Ovary (tissue), 10 donors: ENCODE measurements at regions of chr1 and their contacts with region 1.

Region 1: GRCh38 chr1:64469977-64470664 is at the start of gene CACHD1:
- DNase-seq: peak; percentile 80 to 88 (median 88)
- H3K4me3 ChIP-seq: peak within 1 kb of the TSS; percentile 61
- H3K27ac ChIP-seq: peak within 1 kb of the TSS; percentile 89 to 91
- H3K4me1 ChIP-seq: peaks cover 7% of the 10 kb centered on the region
- H3K27me3 ChIP-seq: no peaks in the 10 kb centered on the region
- CTCF ChIP-seq: peak; percentile 36 to 50 (median 47)
- EP300 ChIP-seq: no peak
- POLR2A ChIP-seq: no peak
- total RNA-seq, gene CACHD1: 17.0 to 33.1 (median 23.2) TPM

Region 2: GRCh38 chr1:64539781-64540218 is 69.7 kb after region 1 on chr1:
- intact Hi-C with region 1: loop called (anchors 10 kb)
- DNase-seq: peak; percentile 70 to 85 (median 79)
- H3K4me3 ChIP-seq: peak overlapping the region; percentile 0
- H3K27ac ChIP-seq: peak overlapping the region in 1 of 2 donors; percentile 47
- H3K4me1 ChIP-seq: peaks cover 23% of the 10 kb centered on the region
- H3K27me3 ChIP-seq: no peaks in the 10 kb centered on the region
- CTCF ChIP-seq: no peak
- EP300 ChIP-seq: no peak
- POLR2A ChIP-seq: no peak

Region 3: GRCh38 chr1:64572222-64572900 is 102.2 kb after region 1 on chr1:
- intact Hi-C with region 1: loop called in 1 of 4 experiments (anchors 10 kb)
- DNase-seq: no peak
- H3K4me3 ChIP-seq: no peak overlapping the region
- H3K27ac ChIP-seq: no peak overlapping the region
- H3K4me1 ChIP-seq: peaks cover 6% of the 10 kb centered on the region
- H3K27me3 ChIP-seq: no peaks in the 10 kb centered on the region
- CTCF ChIP-seq: no peak
- EP300 ChIP-seq: no peak
- POLR2A ChIP-seq: no peak

Region 4: GRCh38 chr1:64584479-64584878 is 114.4 kb after region 1 on chr1:
- intact Hi-C with region 1: loop called in 2 of 4 experiments (anchors 10 kb)
- DNase-seq: no peak
- H3K4me3 ChIP-seq: no peak overlapping the region
- H3K27ac ChIP-seq: no peak overlapping the region
- H3K4me1 ChIP-seq: no peaks in the 10 kb centered on the region
- H3K27me3 ChIP-seq: no peaks in the 10 kb centered on the region
- CTCF ChIP-seq: no peak
- EP300 ChIP-seq: no peak
- POLR2A ChIP-seq: no peak

Region 5: DNA sequence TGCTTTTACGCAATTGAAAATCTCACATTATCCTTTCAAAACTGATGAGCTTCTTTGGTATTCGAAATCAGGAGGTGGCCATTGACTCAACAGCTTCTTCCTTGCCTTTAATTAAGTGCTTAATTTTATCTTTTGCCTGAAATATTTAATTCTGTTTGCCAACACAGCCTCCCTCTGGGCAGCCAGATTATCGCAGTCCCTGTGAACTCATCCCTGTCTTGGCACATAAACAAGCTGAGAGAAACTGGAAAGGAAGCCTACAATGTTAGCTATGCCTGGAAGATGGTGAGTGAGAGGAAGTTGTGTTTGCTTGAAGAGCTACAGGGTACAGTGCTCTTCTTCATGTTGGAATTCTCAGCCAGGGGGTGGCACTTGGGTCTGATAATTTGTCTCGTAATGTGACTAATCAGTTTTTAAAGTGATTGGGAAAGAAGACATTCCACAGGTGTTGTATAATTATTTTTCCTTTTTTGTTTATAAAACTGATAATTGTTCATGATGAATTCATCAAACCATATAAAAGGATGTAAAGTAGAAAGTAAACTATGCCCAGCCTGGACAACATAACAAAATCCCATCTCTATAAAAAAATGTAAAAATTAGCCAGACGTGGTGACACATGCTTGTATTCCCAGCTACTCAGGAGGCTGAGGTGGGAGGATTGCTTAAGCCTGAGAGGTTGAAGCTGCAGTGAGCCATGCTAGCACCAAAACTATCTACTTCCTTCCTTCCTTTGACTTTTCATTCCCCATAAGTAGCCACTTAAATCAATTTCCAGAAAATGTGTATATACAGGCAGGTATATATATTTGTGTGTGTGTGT is 184.6 kb after region 1 on chr1:
- intact Hi-C with region 1: loop called in 2 of 4 experiments (anchors 10 kb)
- DNase-seq: peak in 3 of 5 donors; percentile 25 to 44 (median 31)
- H3K4me3 ChIP-seq: no peak overlapping the region
- H3K27ac ChIP-seq: no peak overlapping the region
- H3K4me1 ChIP-seq: no peaks in the 10 kb centered on the region
- H3K27me3 ChIP-seq: no peaks in the 10 kb centered on the region
- CTCF ChIP-seq: peak in 2 of 3 donors; percentile 39 to 41
- EP300 ChIP-seq: no peak
- POLR2A ChIP-seq: no peak

Region 6: DNA sequence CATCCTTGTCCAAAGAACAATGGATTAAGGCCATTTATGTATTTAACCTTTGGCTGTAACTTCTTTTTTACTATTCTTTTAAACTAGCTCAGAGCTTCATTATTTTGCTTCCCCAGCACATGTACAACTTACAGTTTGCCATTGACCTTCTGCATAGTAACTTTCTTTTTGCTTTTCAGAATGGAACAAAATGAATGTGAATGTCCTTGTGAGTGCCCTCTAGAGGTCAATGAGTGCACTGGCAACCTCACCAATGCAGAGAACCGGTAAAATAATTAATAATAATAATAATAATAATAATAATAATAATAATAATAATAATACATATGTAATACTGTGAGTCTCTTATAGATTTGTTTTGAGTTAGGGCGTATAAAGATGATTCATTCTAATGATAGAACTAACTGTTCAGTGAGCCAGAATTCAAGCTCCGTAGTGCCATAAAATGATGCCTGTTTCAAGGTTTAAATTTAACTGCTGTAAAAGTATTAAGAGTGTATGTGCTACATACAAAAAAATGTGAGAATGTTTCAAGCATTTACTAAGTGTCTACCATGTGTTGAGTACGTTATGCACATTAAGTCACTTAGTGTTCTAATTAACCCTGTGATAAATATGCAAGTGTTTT is 205.7 kb after region 1 on chr1:
- intact Hi-C with region 1: loop called in 2 of 4 experiments (anchors 5 kb)
- DNase-seq: no peak
- H3K4me3 ChIP-seq: no peak overlapping the region
- H3K27ac ChIP-seq: no peak overlapping the region
- H3K4me1 ChIP-seq: peaks cover 2% of the 10 kb centered on the region
- H3K27me3 ChIP-seq: no peaks in the 10 kb centered on the region
- CTCF ChIP-seq: peak in 2 of 3 donors; percentile 20 to 49
- EP300 ChIP-seq: no peak
- POLR2A ChIP-seq: no peak